Transverse colon (tissue), 4 donors: ENCODE measurements at regions of chr5 and their contacts with region 1.

Region 1: GRCh38 chr5:2213121-2213730 is 330.5 kb upstream of the IRX4 start:
- DNase-seq: no peak
- H3K4me3 ChIP-seq: no peak overlapping the region
- H3K27ac ChIP-seq: no peak overlapping the region
- H3K4me1 ChIP-seq: no peaks in the 10 kb centered on the region
- H3K27me3 ChIP-seq: peaks cover 12% of the 10 kb centered on the region
- CTCF ChIP-seq: no peak
- EP300 ChIP-seq: no peak
- POLR2A ChIP-seq: no peak

Region 2: DNA sequence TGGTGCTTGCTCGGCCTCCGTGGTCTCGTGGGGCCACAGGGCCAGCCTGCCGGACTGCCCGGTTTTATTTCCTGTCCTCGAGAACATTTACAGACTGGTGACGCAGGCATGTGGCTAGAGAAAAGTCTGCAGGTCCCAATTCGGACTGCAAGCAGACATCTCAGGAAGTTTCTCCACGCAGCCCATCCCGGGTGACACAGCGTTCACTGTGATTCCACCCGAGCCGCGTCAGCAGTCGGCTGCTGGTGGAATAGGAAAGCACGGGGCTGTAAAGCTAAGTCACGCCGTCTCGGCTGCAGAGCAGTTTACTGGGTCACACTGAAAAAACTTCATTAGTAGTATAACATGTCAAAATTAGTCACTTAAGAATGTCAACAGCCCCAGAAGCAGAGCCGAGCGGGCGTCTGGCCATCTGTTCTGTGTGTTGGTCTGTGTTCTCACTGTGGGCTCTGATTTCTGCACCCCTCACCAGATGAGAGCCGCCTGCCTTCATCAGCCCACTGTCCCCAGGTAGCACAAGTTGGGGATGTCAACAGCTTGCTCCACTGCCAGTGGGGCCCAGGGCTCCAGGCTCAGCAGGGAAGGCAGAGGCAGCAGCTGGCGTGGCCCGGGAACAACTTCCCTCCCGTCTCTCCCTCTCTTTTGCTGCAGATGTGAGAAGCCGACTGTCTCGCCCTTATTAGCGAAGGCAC is 174.6 kb after region 1 on chr5:
- in situ Hi-C with region 1: no loop called
- intact Hi-C with region 1: loop called (anchors 10 kb)
- DNase-seq: no peak
- H3K4me3 ChIP-seq: no peak overlapping the region
- H3K27ac ChIP-seq: no peak overlapping the region
- H3K4me1 ChIP-seq: no peaks in the 10 kb centered on the region
- H3K27me3 ChIP-seq: no peaks in the 10 kb centered on the region
- CTCF ChIP-seq: no peak
- EP300 ChIP-seq: no peak
- POLR2A ChIP-seq: no peak

Region 3: DNA sequence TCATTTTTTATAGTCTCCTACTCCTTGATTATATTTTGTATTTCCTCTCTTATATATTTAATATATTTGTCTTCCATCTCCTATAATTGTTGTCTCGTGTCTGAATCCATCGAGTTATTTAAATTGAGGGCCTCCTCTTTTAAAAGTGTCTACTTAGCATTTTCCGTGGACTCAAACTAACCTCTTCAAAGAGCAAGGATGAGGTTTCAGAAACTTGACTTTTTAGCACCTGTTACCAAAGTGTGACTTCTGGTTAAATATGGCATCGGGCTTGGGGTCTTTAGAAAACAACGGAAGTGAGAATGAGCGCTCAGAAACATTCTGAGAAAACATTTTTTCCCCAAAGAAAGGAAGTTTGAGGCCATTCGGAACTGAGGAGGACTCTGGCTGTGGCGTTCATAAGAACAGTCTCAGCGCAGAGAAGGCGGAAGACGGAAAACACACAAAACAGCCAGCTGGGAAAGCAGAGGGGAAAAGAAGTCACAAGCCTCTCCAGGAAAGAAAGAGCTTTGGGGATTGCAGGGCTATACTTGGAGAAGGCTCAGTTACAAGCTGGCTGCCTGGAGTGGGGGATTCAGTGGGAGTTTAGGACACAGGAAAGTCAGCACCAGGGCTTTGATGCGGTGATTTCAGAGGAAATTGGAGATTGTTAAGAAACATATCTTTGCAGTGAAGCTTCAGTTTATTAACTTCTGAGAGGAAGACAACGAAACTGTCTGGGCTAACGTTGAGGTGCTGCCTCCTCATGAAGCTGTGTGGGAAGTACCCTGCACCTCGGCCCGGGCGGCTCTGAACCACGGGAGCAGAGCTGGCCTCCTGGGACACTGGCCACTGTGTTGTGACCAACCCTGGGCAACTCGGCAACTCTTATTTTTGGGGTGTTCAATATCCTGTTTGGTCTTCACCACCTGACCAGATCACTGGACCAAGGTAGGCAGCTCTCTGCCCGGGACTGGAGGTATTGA is 563.4 kb after region 1 on chr5:
- in situ Hi-C with region 1: no loop called
- intact Hi-C with region 1: no loop called
- DNase-seq: no peak
- H3K4me3 ChIP-seq: no peak overlapping the region
- H3K27ac ChIP-seq: no peak overlapping the region
- H3K4me1 ChIP-seq: no peaks in the 10 kb centered on the region
- H3K27me3 ChIP-seq: peaks cover 4% of the 10 kb centered on the region
- CTCF ChIP-seq: no peak
- EP300 ChIP-seq: no peak
- POLR2A ChIP-seq: no peak